ENCODE measurements at regions of chr5 and their contacts with region 1.

Region 1: DNA sequence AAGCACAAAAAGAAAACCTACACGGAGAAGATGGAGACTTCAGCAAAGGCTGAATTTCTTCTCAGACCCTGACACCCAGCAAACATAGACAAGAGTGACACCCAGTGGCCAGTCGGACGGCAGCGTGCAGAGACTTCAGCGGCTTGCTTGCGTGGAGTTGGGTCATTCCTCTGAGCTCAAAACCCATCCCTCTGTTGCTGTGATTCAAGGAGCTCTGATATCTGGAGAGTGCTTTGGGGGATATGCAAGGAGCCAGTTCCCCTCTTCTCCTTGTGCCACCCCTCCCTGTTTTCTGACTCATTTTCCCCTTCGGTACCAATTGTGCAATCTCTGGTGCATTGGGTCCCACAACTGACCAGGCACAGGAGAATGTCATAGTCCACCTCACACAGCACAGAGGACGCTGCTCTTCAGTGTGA is 27.5 kb downstream of the SH3TC2 start:
- DNase-seq: peak; percentile 71
- ATAC-seq: peak; percentile 98
- H3K4me3 ChIP-seq: no peak overlapping the region
- H3K27ac ChIP-seq: no peak overlapping the region
- H3K4me1 ChIP-seq: no peaks in the 10 kb centered on the region
- H3K27me3 ChIP-seq: no peaks in the 10 kb centered on the region
- CTCF ChIP-seq: peak; percentile 91

Region 2: DNA sequence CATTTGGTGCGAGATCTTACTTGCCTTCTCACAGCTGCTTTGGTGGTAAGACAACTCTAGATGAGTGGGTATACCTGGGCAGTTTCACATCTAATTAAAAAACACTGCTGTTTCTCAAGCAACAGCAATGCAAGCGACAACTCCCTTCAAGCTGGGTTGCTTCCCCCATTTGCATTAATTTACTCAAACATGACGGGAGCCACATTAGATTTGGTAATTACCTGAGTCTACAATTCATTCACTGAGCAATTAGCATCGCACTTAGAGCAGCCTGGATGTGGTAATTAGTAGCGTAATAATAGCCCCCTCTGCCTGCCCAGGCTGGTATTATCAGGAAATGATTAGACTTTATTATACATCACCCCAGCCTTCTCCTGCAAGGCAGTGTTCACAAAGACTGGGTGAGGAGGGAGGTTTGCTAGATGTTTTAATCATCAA is 578.2 kb before region 1 on chr5:
- CTCF ChIA-PET with region 1: no interaction called
- POLR2A ChIA-PET with region 1: no interaction called
- in situ Hi-C with region 1: no loop called
- intact Hi-C with region 1: loop called (anchors 10 kb)
- DNase-seq: no peak
- ATAC-seq: no peak
- H3K4me3 ChIP-seq: no peak overlapping the region
- H3K27ac ChIP-seq: no peak overlapping the region
- H3K4me1 ChIP-seq: no peaks in the 10 kb centered on the region
- H3K27me3 ChIP-seq: no peaks in the 10 kb centered on the region; the same call in 1 of the 2 replicates
- CTCF ChIP-seq: peak; percentile 45

Region 3: GRCh38 chr5:148740966-148741742 is 294.2 kb before region 1 on chr5:
- CTCF ChIA-PET with region 1: interaction called, 7 read pairs
- POLR2A ChIA-PET with region 1: no interaction called
- in situ Hi-C with region 1: no loop called
- intact Hi-C with region 1: loop called (anchors 1 kb)
- DNase-seq: peak; percentile 69
- ATAC-seq: peak; percentile 73
- H3K4me3 ChIP-seq: no peak overlapping the region
- H3K27ac ChIP-seq: no peak overlapping the region
- H3K4me1 ChIP-seq: no peaks in the 10 kb centered on the region
- H3K27me3 ChIP-seq: no peaks in the 10 kb centered on the region
- CTCF ChIP-seq: peak; percentile 76; the same call in 1 of the 2 replicates

Region 4: DNA sequence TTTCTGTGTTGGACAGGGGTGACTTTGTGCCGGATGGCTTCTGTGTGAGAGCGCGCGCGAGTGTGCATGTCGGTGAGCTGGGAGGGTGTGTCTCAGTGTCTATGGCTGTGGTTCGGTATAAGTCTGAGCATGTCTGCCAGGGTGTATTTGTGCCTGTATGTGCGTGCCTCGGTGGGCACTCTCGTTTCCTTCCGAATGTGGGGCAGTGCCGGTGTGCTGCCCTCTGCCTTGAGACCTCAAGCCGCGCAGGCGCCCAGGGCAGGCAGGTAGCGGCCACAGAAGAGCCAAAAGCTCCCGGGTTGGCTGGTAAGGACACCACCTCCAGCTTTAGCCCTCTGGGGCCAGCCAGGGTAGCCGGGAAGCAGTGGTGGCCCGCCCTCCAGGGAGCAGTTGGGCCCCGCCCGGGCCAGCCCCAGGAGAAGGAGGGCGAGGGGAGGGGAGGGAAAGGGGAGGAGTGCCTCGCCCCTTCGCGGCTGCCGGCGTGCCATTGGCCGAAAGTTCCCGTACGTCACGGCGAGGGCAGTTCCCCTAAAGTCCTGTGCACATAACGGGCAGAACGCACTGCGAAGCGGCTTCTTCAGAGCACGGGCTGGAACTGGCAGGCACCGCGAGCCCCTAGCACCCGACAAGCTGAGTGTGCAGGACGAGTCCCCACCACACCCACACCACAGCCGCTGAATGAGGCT is 209.2 kb before region 1 on chr5 and contains the start of gene ADRB2:
- CTCF ChIA-PET with region 1: no interaction called
- POLR2A ChIA-PET with region 1: no interaction called
- in situ Hi-C with region 1: no loop called
- intact Hi-C with region 1: loop called (anchors 10 kb)
- DNase-seq: peak; percentile 71
- ATAC-seq: peak; percentile 98
- H3K4me3 ChIP-seq: peak within 1 kb of the TSS; percentile 56 to 86
- H3K27ac ChIP-seq: no peak within 1 kb of the TSS; the same call in 1 of the 2 replicates
- H3K4me1 ChIP-seq: peaks cover 10% of the 10 kb centered on the region; the same call in 1 of the 2 replicates
- H3K27me3 ChIP-seq: no peaks in the 10 kb centered on the region; the same call in 1 of the 2 replicates
- CTCF ChIP-seq: no peak
- total RNA-seq, gene ADRB2: 1.0 TPM

Region 5: GRCh38 chr5:148912714-148913398 is 122.5 kb before region 1 on chr5:
- CTCF ChIA-PET with region 1: interaction called, 3 read pairs
- POLR2A ChIA-PET with region 1: no interaction called
- in situ Hi-C with region 1: no loop called
- intact Hi-C with region 1: loop called (anchors 10 kb)
- DNase-seq: peak; percentile 78
- ATAC-seq: peak; percentile 85
- H3K4me3 ChIP-seq: peak overlapping the region in 1 of 2 experiments; percentile 26; a peak in 2 of 4 replicates
- H3K27ac ChIP-seq: peak overlapping the region; percentile 21; the same call in 1 of the 2 replicates
- H3K4me1 ChIP-seq: peaks cover 8% of the 10 kb centered on the region
- H3K27me3 ChIP-seq: no peaks in the 10 kb centered on the region
- CTCF ChIP-seq: peak; percentile 78

Region 6: DNA sequence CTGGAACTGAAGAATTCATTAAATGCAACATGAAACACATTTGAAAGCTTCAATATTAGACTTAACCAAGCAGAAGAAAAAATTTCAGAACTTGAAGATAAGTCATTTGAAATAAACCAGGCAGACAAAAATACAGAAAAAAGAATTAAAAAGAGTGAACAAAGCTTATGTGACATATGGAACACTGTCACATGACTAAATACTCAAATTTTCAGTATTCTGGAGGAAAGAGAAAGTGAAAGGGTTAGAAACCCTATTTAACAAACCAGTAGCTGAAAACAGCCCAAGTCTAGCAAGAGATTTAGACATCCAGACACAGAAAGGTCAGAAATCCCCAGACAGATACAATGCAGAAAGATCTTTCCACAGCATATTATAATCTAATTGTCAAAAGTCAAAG is 64.5 kb after region 1 on chr5:
- CTCF ChIA-PET with region 1: no interaction called
- POLR2A ChIA-PET with region 1: no interaction called
- in situ Hi-C with region 1: no loop called
- intact Hi-C with region 1: no loop called
- DNase-seq: no peak
- ATAC-seq: no peak
- H3K4me3 ChIP-seq: no peak overlapping the region
- H3K27ac ChIP-seq: no peak overlapping the region
- H3K4me1 ChIP-seq: no peaks in the 10 kb centered on the region
- H3K27me3 ChIP-seq: no peaks in the 10 kb centered on the region
- CTCF ChIP-seq: no peak

Measured in Panc1 (cell line).